Dorsolateral prefrontal cortex (tissue), 120 donors: ENCODE measurements at regions of chr19 and their contacts with region 1.

Region 1: GRCh38 chr19:38213911-38214625 is 10.0 kb downstream of the DPF1 start:
- DNase-seq: peak in 8 of 10 donors; percentile 39 to 82 (median 72)
- H3K4me3 ChIP-seq: peak overlapping the region in 7 of 59 donors; percentile 1 to 46 (median 5)
- H3K27ac ChIP-seq: peak overlapping the region in 57 of 59 donors; percentile 5 to 98 (median 91)
- H3K27me3 ChIP-seq: peaks cover 0 to 2% (median 0%) of the 10 kb centered on the region in 45 donors
- CTCF ChIP-seq: no peak

Region 2: GRCh38 chr19:37906869-37907734 is 307.0 kb before region 1 on chr19 and contains the start of gene SIPA1L3:
- intact Hi-C with region 1: no loop called
- DNase-seq: peak; percentile 93 to 97 (median 96)
- H3K4me3 ChIP-seq: peak within 1 kb of the TSS; percentile 75 to 99 (median 94)
- H3K27ac ChIP-seq: peak within 1 kb of the TSS in 54 of 59 donors; percentile 40 to 92 (median 77)
- H3K27me3 ChIP-seq: no peaks in the 10 kb centered on the region
- CTCF ChIP-seq: peak in 44 of 56 donors; percentile 10 to 68 (median 45)
- total RNA-seq, gene SIPA1L3: 27.0 to 62.5 (median 41.4) TPM

Region 3: DNA sequence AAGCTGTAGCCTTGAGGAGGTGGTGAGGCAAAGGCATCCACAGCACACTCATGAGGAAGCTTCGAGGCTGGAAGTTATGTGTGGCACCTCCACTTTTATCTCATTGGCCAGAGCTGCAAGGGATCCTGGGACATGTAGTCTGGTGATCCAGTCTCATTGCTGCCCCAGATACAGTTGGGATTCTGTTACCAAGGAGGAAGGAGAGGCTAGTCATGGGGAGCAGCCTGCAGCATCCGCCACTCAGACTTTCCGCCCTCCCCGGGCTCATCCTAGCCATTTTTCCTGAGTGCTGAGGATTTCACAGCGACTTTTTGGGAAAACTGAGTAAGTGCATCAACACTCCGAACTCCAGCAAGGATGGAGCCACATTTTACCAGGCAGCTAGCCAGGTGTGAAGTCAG is 64.4 kb before region 1 on chr19:
- intact Hi-C with region 1: loop called in 1 of 2 experiments (anchors 5 kb)
- DNase-seq: peak in 8 of 10 donors; percentile 11 to 74 (median 49)
- H3K4me3 ChIP-seq: peak overlapping the region in 2 of 59 donors; percentile 22 to 31
- H3K27ac ChIP-seq: peak overlapping the region in 20 of 59 donors; percentile 15 to 89 (median 46)
- H3K27me3 ChIP-seq: no peaks in the 10 kb centered on the region
- CTCF ChIP-seq: no peak

Region 4: DNA sequence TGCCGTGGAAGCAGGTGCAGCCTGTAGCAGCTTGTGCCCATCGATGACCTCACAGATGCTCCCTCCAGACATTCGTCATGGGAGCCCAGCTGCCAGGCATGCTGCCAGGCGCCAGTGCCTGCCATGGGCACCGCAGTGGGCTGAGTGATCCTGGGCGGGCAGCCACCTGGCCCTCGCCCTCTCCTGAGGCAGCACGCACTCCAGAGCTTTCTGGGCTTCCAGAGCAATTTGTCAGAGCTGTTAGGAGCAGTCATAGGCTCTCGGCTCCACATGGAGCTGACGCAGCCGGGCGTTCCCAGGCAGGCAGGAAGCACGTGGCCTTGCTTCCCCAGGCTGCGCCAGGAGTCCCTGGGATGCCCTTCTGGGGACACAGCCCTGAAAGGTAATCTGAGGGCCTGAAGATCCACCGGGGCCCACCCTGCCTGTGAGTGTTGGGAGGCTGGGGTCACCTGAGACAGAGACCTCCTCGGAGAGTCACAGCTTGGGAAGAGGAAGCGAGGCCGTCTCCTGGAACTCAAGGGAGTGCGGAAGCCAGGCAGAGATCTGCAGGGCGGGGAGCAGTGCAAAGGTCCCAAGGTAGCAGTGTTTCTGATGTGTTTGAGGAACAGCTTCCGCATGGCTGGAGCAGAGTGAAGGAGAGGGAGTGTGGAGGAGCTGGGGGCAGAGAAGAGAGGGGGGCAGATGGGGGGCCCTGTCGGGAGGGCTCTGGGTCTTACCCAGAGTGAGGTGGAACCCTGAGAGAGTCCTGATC is 40.6 kb before region 1 on chr19:
- intact Hi-C with region 1: loop called in 1 of 2 experiments (anchors 5 kb)
- DNase-seq: peak; percentile 62 to 95 (median 92)
- H3K4me3 ChIP-seq: peak overlapping the region in 10 of 59 donors; percentile 3 to 36 (median 20)
- H3K27ac ChIP-seq: peak overlapping the region; percentile 19 to 91 (median 77)
- H3K27me3 ChIP-seq: no peaks in the 10 kb centered on the region
- CTCF ChIP-seq: peak in 3 of 56 donors; percentile 14 to 21 (median 20)

Region 5: GRCh38 chr19:38224014-38224862 is 10.2 kb after region 1 on chr19 and contains the start of gene DPF1:
- intact Hi-C with region 1: loop called (anchors 2 kb)
- DNase-seq: peak; percentile 64 to 89 (median 74)
- H3K4me3 ChIP-seq: peak within 1 kb of the TSS; percentile 50 to 78 (median 66)
- H3K27ac ChIP-seq: peak within 1 kb of the TSS in 38 of 59 donors; percentile 3 to 78 (median 42)
- H3K27me3 ChIP-seq: peaks cover 0 to 5% (median 0%) of the 10 kb centered on the region in 45 donors
- CTCF ChIP-seq: peak in 8 of 56 donors; percentile 7 to 20 (median 13)
- total RNA-seq, gene DPF1: 22.0 to 91.2 (median 57.5) TPM

Region 6: DNA sequence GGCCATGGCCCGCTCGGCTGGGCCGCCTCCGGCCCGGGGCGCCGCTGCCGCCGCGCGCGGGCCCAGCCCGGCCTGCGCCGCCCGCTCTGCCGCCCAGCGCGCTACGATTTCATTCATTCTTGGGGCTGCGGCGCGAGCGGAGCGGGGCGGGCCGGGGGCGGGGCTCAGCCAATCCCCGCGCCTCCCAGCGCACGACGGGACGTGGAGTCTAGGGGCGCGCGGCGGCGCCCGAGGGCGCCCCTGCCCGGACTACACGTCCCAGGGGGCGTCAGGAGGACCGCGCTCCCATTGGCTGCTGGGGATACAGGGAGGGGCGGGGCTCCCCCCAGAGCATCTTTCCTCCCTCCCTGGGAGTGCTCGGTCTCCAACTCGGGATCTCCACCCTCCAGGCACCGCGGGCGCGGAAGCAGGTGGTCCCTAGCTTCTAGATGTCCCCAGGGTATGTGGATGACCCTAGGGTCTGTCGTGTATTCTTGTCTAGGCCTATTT is 15.6 kb after region 1 on chr19:
- intact Hi-C with region 1: loop called (anchors 2 kb)
- DNase-seq: peak; percentile 89 to 97 (median 96)
- H3K4me3 ChIP-seq: peak overlapping the region; percentile 51 to 80 (median 67)
- H3K27ac ChIP-seq: peak overlapping the region in 50 of 59 donors; percentile 13 to 91 (median 74)
- H3K27me3 ChIP-seq: peaks cover 0 to 5% (median 0%) of the 10 kb centered on the region in 45 donors
- CTCF ChIP-seq: peak in 47 of 56 donors; percentile 18 to 68 (median 41)